Posterior cingulate gyrus (tissue), 11 donors: ENCODE measurements at regions of chr17 and their contacts with region 1.

Region 1: DNA sequence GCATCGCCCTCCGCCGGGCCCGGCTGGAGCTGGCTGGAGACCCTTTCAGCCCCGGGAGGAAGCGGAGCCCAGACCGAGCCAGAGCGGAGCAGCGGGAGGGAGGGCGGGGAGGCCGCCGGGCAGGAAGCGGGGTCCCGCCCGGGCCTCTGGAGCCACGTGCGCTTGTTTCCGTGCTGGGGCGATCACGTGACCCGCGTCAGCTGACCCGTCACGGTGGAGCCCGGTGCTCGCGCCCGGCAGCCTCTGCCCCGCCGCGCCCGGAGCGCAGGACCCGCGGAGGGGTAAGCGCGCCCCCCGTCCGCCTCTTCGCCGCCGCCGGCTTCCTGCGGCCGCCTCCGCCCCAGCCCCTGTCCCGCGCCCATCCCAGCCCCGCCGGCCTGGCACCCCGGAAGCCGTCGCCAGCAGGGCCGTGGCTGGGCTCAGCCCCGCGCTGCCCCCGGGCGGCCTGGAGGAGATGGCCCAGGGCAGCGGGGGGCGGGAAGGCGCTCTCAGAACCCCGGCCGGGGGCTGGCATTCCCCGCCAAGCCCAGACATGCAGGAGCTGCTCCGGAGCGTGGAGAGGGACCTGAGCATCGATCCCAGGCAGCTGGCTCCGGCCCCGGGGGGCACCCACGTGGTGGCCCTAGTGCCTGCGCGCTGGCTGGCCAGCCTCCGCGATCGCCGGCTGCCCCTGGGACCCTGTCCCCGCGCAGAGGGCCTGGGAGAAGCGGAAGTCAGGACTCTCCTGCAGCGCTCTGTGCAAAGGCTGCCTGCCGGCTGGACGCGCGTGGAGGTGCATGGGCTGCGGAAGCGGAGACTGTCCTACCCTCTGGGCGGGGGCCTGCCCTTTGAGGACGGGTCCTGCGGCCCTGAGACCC is at the start of gene WDR81:
- DNase-seq: peak; percentile 83 to 98 (median 92)

Region 2: GRCh38 chr17:1693339-1693738 is 31.4 kb before region 1 on chr17:
- intact Hi-C with region 1: no loop called
- DNase-seq: peak in 1 of 10 donors; percentile 15

Region 3: GRCh38 chr17:1783834-1784611 is 59.3 kb after region 1 on chr17:
- intact Hi-C with region 1: loop called (anchors 5 kb)
- DNase-seq: peak in 5 of 10 donors; percentile 22 to 75 (median 39)